Left cardiac atrium (tissue), 4 donors: ENCODE measurements at regions of chr14 and their contacts with region 1.

Region 1: DNA sequence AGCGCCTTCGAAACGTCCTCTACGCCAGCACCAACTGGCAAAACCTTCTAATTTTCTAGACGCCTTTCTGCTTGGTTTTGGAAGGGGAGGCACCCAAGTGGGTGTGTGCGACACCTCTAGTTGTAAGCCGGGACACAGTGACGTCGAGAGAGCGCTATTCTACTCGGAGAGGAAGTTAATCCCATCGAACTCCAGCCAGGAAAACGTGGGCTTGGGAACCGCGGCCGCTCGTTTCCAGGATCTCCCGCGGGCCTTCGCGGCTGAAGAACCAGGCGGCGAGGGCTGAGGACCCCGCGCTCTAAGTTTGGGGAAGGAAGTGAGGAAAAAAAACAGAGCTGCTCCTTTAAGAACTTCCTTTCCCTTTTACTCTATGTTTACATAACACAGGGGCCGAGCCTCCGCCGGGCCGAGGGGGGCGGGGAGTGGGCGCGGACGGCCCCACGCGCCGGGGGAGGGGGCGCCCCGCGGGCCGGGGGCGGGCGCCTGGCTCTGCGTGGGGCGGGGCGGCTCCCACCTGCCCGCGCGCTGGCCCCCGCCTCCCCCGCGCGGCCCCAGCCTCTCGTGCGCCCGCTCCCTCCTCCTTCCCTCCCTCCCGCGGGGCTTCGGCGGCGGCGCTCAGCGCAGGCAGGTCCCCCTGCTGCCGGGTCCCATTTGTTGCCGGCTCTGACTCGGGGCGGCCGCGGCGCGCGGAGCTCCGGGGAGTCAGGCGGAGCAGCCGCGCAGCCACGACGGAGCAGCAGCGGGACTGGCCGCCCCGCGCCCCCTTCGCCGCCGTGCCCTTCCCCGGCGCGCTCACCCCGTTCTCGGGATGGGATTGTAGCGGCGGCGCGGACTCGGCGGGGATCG is at the start of gene PELI2:
- DNase-seq: peak; percentile 83
- ATAC-seq: peak; percentile 81 to 87
- total RNA-seq, gene PELI2: 3.0 to 3.7 TPM

Region 2: GRCh38 chr14:55715889-55716288 is 402.1 kb before region 1 on chr14:
- intact Hi-C with region 1: loop called in 1 of 2 experiments (anchors 10 kb)
- DNase-seq: no peak
- ATAC-seq: peak; percentile 42 to 61

Region 3: DNA sequence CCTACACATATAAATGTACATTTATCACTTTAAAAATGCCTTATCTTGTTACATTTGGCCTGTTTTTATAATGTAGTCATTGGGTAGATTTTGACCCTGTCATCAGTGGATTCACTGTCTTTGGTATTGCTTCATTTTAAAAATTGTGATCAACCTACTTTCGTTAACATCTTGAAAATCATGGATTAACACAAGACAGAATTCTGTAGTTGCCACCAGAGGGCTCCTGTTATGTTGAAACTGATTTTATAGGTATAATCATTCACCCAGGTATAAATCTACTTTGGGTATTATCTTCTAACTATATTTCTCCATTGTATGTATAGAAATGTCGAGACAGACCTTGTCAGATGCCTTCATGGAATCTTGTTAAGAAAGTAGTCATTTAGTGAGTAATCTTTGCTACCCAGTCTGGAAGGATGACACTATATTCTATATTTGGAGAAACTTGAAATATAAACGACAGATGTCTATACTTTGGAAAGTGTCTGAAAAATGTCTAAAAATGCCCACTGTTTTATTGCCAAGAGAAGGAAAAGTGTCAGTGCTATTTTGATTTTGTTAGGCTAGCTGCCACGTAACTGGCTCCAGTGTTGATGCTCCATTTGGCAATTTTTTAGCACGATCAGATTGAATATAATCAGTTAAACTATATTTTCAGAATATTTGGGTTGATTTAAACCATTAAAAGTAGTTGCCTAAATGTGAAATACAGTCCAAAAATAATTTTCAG is 129.6 kb after region 1 on chr14:
- intact Hi-C with region 1: no loop called
- DNase-seq: no peak
- ATAC-seq: no peak